ENCODE measurements at regions of chr17 and their contacts with region 1.

Region 1: GRCh38 chr17:69246726-69247375 is 18.2 kb upstream of the ABCA10 start:
- DNase-seq: no peak
- H3K4me3 ChIP-seq: no peak overlapping the region
- CTCF ChIP-seq: peak; percentile 30

Region 2: DNA sequence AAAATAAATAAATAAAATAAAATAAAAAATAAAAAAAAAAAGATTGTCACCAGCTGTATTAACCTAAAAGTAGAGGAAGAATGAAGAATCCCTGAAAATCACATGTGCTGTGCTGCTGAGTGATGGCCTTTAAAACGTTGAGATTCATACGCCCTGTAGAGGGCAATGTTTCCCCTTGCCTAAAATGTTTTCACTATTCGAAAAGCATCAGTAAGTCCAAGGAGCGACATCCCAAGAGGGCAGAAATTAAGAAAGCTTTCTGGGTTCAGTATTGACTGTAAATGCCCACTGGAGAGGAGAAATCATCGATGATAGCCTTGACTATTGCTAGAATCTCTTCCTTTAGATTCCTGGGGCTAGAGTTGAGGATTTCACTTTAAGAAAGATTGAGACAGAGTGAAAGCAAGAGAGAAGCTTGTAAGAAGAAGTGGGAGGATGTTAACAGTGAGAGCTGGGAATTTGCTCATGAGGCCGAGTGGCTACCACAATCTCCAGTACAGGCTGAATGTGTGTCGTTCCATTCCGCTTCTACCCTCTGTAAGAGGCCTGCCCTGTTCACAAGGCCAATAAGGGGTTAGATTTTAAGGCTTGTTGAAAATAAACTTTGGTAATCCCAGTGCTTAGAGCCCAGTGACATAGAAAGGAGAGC is 474.9 kb before region 1 on chr17:
- CTCF ChIA-PET with region 1: interaction called, 243 read pairs
- POLR2A ChIA-PET with region 1: no interaction called
- DNase-seq: no peak
- H3K4me3 ChIP-seq: no peak overlapping the region
- CTCF ChIP-seq: peak; percentile 53

Region 3: DNA sequence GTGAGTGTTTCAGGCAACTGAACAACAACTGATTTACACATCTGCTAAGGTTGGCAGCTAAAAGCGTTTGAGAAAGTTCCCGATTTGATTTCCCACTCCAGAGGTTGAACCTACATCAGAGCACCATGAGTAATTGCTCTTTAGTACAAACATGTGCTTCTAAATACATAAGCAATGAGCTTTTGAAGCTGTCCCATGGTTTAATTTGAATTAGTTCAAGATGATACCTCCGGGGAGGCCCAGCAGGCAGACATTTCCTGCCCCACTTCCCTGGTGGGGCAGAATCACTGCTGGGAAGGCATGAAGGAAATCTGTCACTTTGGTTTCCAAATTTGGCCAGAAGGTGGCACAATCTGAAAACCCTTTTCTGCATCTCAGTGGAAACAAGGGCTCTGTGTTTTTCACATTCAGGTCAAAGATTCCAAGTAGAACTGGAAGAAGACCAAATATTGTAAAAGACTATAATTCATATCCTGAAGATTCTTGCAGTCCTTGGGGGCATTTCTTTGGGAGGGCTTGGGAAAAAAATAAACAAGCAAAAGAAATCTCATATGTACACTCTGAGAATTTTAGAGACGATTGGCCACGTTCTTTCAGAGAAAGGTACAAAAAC is 469.5 kb before region 1 on chr17:
- CTCF ChIA-PET with region 1: interaction called, 243 read pairs
- POLR2A ChIA-PET with region 1: no interaction called
- DNase-seq: no peak
- H3K4me3 ChIP-seq: no peak overlapping the region
- CTCF ChIP-seq: peak; percentile 72

Region 4: DNA sequence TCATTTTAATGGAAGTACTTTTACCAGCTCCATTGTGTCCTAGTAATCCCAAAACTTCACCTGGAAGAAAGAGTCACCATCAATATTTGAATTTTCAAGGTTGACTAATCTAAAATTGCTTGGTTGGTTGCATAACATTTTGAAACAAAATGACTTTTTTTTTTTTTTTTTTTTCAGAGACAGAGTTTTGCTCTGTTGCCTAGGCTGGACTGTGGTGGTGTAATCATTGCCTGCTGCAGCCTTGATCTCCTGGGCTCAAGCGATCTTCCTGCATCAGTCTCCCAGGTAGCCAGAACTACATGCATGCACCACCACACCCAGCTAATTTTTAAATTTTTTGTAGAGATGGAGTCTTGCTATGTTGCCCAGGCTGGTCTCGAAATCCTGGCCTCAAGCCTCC is 92.6 kb before region 1 on chr17:
- CTCF ChIA-PET with region 1: no interaction called
- POLR2A ChIA-PET with region 1: no interaction called
- DNase-seq: no peak
- H3K4me3 ChIP-seq: no peak overlapping the region
- CTCF ChIP-seq: no peak

Region 5: DNA sequence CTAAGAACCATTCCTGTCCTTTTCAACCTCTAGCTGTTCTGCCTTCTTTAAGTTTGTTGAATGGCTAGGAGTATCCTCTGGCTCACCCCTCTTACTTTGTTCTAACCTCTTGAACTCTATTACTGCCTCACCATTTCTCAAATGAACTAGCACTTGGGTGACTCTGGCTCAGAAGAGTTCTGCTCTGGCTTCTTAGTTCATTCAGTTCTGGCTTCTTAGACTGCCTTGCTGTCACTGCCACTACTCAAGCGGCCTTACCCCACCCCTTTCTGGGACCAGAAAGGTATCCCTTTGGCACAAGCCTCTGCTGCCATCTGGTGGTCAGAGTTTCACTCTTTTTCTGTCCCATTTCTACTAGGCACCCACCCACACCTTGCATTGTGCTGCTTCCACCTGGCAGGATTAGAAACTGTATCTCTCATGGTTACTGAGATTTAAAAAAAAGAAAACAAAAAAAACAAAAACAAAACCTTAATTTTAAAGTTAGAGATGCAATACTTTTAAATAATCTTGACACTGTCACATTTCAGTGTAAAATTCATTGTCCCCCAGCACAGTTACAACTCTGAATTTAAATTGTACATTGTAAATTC is 11.4 kb before region 1 on chr17:
- CTCF ChIA-PET with region 1: interaction called, 26 read pairs
- POLR2A ChIA-PET with region 1: no interaction called
- DNase-seq: no peak
- H3K4me3 ChIP-seq: no peak overlapping the region
- CTCF ChIP-seq: peak; percentile 69

Measured in AG04449 (cell line).